Pancreas (tissue), 10 donors: ENCODE measurements at regions of chrX and their contacts with region 1.

Region 1: DNA sequence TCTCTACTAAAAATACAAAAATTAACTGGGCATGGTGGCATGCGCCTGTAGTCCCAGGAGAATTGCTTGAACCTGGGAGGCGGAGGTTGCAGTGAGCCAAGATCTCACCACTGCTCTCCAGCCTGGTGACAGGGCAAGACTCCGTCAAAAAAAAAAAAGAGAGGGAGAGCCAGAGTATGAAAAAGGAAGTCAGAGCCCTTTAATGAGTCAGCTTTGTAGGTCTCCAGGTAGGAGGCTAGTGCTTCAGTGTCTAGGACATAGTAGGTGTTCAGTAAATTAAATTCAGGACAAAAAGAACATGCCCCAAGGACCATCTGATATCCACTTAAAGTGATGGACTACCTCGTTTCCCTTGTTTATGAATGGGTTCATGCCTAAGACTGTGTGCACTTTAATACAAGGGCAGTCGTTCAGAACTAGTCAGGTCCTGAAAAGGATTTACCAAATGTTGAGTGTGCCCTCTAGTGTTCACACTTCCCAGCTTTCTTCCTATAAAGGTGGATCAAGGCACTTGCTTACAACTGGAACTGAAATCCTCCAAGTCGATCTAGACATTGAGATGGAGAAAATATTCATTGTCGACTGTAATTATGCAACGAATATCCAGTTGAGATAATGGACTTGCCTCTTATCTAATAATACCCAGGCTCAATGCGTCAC is 29.0 kb downstream of the F9 start:
- DNase-seq: peak in 3 of 6 donors; percentile 5 to 47 (median 28)
- ATAC-seq: peak; percentile 61 to 86 (median 86)
- H3K4me3 ChIP-seq: no peak overlapping the region
- H3K27ac ChIP-seq: no peak overlapping the region
- H3K4me1 ChIP-seq: no peaks in the 10 kb centered on the region
- H3K27me3 ChIP-seq: peaks cover 0 to 7% (median 3%) of the 10 kb centered on the region in 4 donors
- CTCF ChIP-seq: peak; percentile 34 to 52 (median 44)

Region 2: GRCh38 chrX:138775517-138775916 is 784.0 kb before region 1 on chrX:
- intact Hi-C with region 1: loop called in 2 of 3 experiments (anchors 10 kb)
- DNase-seq: no peak
- ATAC-seq: peak in 3 of 4 donors; percentile 50 to 54 (median 53)
- H3K4me3 ChIP-seq: no peak overlapping the region
- H3K27ac ChIP-seq: no peak overlapping the region
- H3K4me1 ChIP-seq: no peaks in the 10 kb centered on the region
- H3K27me3 ChIP-seq: no peaks in the 10 kb centered on the region
- CTCF ChIP-seq: peak in 3 of 4 donors; percentile 27 to 30 (median 30)

Region 3: DNA sequence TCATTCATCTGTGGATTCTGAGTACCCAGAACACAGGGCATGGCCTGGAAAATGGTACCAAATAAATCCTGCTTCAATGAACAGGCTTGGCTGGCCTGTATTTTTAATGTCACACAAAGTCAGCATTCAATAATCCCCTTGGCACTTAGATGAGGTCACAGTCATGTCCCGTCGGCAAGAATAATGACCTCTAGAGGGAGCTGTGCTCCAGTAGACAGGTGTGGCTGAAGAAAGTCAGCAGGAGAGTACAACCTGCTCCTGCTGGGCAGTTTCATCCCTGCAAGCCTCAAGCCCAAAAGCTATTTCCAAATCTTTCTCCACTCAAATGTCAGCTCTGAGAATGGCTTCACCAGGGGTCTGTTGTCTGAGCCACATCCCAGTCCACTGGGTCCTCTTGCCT is 433.0 kb before region 1 on chrX:
- intact Hi-C with region 1: loop called in 1 of 3 experiments (anchors 10 kb)
- DNase-seq: peak in 4 of 6 donors; percentile 11 to 54 (median 23)
- ATAC-seq: peak in 3 of 4 donors; percentile 82 to 92 (median 91)
- H3K4me3 ChIP-seq: no peak overlapping the region
- H3K27ac ChIP-seq: no peak overlapping the region
- H3K4me1 ChIP-seq: no peaks in the 10 kb centered on the region
- H3K27me3 ChIP-seq: peaks cover 0 to 4% (median 0%) of the 10 kb centered on the region in 4 donors
- CTCF ChIP-seq: peak; percentile 18 to 53 (median 44)

Region 4: DNA sequence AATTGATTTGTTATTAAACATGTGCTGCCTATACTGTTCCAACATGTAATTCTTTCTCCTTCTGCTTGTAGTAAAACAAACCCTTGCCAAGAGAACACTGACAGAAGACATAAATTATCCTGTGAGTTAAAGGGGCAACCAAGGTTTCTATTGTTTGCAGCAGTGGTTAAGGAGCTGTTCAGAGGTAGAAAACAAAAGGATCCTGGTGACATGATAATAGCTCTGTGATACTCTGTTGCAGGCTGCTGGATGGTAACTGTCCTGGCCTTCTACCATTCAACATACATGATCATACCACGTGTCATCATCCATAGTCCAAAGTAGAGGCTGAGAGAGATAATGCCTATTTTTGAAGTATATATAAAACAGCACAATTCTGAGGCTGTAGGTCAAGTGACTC is 104.8 kb before region 1 on chrX:
- intact Hi-C with region 1: no loop called
- DNase-seq: no peak
- ATAC-seq: no peak
- H3K4me3 ChIP-seq: no peak overlapping the region
- H3K27ac ChIP-seq: no peak overlapping the region
- H3K4me1 ChIP-seq: no peaks in the 10 kb centered on the region
- H3K27me3 ChIP-seq: peaks cover 0 to 2% (median 0%) of the 10 kb centered on the region in 4 donors
- CTCF ChIP-seq: no peak

Region 5: DNA sequence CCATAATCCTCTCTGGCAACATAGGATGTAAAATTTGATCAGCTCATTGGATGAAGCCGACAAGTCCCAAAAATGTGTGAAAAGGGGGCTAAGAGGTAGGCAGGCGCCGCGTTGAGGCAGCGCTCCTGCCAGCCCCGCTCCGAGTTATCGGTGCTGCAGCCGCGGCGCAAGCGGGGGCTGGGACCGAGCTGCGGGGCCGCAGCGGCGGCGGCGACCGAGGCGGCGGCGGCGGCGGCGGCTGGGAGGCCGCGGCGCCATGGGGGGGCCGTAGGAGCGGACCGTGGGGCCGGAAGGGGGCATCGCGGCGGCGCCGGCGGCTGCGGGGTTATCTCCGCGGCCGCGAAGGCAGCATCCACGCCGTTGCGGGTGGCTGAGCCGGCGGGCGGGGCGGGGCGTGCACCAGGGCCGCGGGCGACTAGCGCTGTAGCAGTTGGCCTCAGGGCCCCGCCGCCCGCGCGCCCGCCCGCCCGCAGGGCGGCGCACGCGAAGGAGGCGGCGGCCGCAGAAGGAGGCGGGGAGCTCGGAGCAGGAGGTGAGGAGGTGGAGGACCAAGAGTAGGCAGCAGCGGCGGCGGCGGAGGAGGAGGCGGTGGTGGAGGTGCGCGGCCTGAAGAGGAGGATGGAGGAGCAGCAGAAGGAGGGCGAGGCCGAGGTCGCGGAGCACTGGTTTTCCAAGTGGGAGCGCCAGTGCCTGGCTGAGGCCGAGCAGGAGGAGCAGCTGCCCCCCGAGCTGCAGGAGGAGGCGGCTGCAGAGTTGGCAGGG is 531.8 kb after region 1 on chrX:
- intact Hi-C with region 1: no loop called
- DNase-seq: peak; percentile 5 to 80 (median 25)
- ATAC-seq: peak; percentile 63 to 88 (median 77)
- H3K4me3 ChIP-seq: peak overlapping the region in 2 of 4 donors; percentile 27 to 36
- H3K27ac ChIP-seq: no peak overlapping the region
- H3K4me1 ChIP-seq: no peaks in the 10 kb centered on the region
- H3K27me3 ChIP-seq: peaks cover 0 to 27% (median 8%) of the 10 kb centered on the region in 4 donors
- CTCF ChIP-seq: no peak